Activated B cell treated with CpG ODN at 0.5 μM for 24 hours (primary cell): ENCODE measurements at regions of chr3 and their contacts with region 1.

Region 1: DNA sequence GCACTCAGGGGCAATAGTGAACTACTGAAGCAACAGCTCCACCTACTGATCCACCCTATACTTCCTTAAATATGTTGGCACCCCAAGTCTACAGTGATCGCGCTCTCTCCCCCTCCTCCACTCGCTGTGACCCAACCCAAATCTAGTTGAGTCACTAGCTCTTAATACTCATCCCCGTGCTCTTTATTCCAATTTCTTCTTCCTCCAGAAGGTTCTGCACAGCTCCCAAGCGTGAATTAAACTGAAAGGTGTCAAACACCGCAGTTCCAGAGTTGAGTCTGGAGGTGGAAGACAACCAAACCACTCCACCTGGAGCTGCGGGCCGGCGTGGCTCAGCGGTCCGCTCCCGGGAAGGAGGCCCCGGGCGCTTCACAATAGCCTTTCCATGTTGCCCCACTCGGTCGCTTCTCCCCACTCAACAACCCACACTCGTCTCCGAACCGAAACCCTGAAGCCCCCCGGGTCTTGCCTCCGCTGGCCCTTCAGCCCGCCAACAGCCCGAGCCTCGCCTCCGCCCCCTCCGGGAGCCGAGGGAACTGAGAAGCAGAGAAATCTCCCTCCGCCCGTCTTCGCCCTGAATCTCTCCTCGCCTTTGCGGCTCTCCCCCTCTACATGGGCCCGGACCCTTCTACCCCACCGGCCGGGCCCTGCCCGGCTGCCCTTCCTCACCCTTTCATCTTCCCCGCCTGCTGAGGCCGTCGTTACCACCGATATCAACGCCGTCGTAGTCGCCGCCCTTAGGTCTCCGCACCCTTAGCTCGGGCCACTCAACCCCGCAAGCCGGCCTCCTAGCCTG is 578 bp downstream of the NAA50 start:
- DNase-seq: peak; percentile 70
- ATAC-seq: peak; percentile 63
- H3K4me3 Mint-ChIP-seq: peak overlapping the region; percentile 93
- H3K27ac Mint-ChIP-seq: peak overlapping the region; percentile 100
- H3K4me1 Mint-ChIP-seq: peaks cover 74% of the 10 kb centered on the region
- H3K27me3 Mint-ChIP-seq: no peaks in the 10 kb centered on the region
- CTCF ChIP-seq: no peak

Region 2: GRCh38 chr3:112473212-112473640 is 1272.2 kb before region 1 on chr3:
- CTCF ChIA-PET with region 1: no interaction called
- POLR2A ChIA-PET with region 1: no interaction called
- intact Hi-C with region 1: loop called (anchors 5 kb)
- DNase-seq: no peak
- ATAC-seq: peak; percentile 80
- H3K4me3 Mint-ChIP-seq: peak overlapping the region; percentile 82
- H3K27ac Mint-ChIP-seq: peak overlapping the region; percentile 98
- H3K4me1 Mint-ChIP-seq: peaks cover 88% of the 10 kb centered on the region
- H3K27me3 Mint-ChIP-seq: no peaks in the 10 kb centered on the region
- CTCF ChIP-seq: no peak

Region 3: GRCh38 chr3:113514265-113514769 is 231.2 kb before region 1 on chr3:
- CTCF ChIA-PET with region 1: interaction called, 3 read pairs
- POLR2A ChIA-PET with region 1: interaction called, 19 read pairs
- intact Hi-C with region 1: loop called (anchors 1 kb)
- DNase-seq: no peak
- ATAC-seq: no peak
- H3K4me3 Mint-ChIP-seq: no peak overlapping the region
- H3K27ac Mint-ChIP-seq: no peak overlapping the region
- H3K4me1 Mint-ChIP-seq: peaks cover 7% of the 10 kb centered on the region
- H3K27me3 Mint-ChIP-seq: peaks cover 16% of the 10 kb centered on the region
- CTCF ChIP-seq: no peak

Region 4: GRCh38 chr3:113696658-113697499 is 48.6 kb before region 1 on chr3:
- CTCF ChIA-PET with region 1: no interaction called
- POLR2A ChIA-PET with region 1: interaction called, 47 read pairs
- intact Hi-C with region 1: loop called (anchors 1 kb)
- DNase-seq: peak; percentile 95
- ATAC-seq: peak; percentile 89
- H3K4me3 Mint-ChIP-seq: no peak overlapping the region
- H3K27ac Mint-ChIP-seq: no peak overlapping the region
- H3K4me1 Mint-ChIP-seq: peaks cover 29% of the 10 kb centered on the region
- H3K27me3 Mint-ChIP-seq: no peaks in the 10 kb centered on the region
- CTCF ChIP-seq: no peak

Region 5: GRCh38 chr3:113838631-113839209 is 93.2 kb after region 1 on chr3 and contains the start of gene GRAMD1C:
- CTCF ChIA-PET with region 1: interaction called, 22 read pairs
- POLR2A ChIA-PET with region 1: interaction called, 8 read pairs
- intact Hi-C with region 1: loop called (anchors 1 kb)
- DNase-seq: peak; percentile 78
- ATAC-seq: peak; percentile 99
- H3K4me3 Mint-ChIP-seq: peak within 1 kb of the TSS; percentile 90
- H3K27ac Mint-ChIP-seq: peak within 1 kb of the TSS; percentile 59
- H3K4me1 Mint-ChIP-seq: peaks cover 22% of the 10 kb centered on the region
- H3K27me3 Mint-ChIP-seq: no peaks in the 10 kb centered on the region
- CTCF ChIP-seq: peak; percentile 59
- total RNA-seq, gene GRAMD1C: 11.4 and 12.2 TPM in 2 replicates

Region 6: DNA sequence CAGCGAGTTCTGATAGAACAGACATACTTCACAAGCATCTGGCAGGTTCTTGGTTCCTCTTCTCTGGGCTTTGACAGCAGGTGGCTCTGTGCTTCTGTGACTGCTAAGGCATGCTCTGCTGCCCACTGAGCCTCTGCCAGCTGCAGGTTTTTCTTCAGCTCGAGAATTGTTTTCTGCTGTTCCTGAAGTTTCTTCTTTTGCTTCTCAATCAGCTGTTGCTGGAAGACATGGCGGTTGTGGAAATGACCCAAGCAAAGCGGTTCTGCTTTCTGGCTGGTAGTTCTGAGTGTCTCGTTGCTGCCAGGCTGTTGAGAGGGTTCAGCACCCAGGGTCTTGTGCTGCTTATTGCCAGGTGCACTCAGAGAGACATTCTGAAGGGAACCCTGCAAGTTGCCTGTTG is 260.0 kb after region 1 on chr3:
- CTCF ChIA-PET with region 1: no interaction called
- POLR2A ChIA-PET with region 1: interaction called, 6 read pairs
- intact Hi-C with region 1: loop called (anchors 2 kb)
- DNase-seq: peak; percentile 52
- ATAC-seq: peak; percentile 95
- H3K4me3 Mint-ChIP-seq: peak overlapping the region; percentile 76
- H3K27ac Mint-ChIP-seq: peak overlapping the region; percentile 97
- H3K4me1 Mint-ChIP-seq: peaks cover 61% of the 10 kb centered on the region
- H3K27me3 Mint-ChIP-seq: no peaks in the 10 kb centered on the region
- CTCF ChIP-seq: no peak

Region 7: DNA sequence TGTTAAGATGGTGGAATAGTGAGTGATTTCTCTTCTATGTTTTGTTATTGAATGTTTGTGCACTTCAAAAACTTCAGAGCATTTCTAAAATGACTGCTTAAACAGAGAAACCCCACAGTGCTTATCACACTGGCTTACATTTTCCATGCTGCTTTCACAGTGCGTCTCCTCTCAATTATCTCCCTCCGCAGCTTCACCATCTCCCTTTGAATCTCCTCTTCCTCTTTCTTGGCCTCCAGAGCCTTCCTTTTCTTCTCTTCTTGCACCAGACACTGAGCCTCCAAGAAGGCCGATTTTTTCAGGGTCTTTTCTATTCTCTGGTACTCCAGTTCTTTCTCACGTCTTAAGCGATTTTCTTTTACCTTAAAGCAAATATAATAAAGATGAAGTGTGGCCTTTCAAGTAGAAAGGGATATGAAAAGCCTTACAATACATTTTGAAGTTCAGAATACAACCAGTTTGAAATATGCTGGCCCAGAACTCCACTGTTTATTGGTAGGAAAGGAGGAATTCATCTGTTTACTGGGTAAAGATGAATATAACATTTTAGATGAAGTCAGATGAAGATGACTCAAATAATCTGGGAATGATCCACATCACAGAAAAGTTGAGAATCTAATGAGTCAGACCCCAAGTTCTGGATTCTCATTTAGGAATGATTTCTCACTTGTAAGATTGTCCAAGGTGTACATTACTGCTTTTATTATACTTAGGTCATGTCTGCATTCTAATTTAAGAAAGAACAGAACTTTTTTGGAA is 289.5 kb after region 1 on chr3:
- CTCF ChIA-PET with region 1: no interaction called
- POLR2A ChIA-PET with region 1: no interaction called
- intact Hi-C with region 1: no loop called
- DNase-seq: no peak
- ATAC-seq: no peak
- H3K4me3 Mint-ChIP-seq: no peak overlapping the region
- H3K27ac Mint-ChIP-seq: no peak overlapping the region
- H3K4me1 Mint-ChIP-seq: no peaks in the 10 kb centered on the region
- H3K27me3 Mint-ChIP-seq: no peaks in the 10 kb centered on the region
- CTCF ChIP-seq: no peak

Region 8: DNA sequence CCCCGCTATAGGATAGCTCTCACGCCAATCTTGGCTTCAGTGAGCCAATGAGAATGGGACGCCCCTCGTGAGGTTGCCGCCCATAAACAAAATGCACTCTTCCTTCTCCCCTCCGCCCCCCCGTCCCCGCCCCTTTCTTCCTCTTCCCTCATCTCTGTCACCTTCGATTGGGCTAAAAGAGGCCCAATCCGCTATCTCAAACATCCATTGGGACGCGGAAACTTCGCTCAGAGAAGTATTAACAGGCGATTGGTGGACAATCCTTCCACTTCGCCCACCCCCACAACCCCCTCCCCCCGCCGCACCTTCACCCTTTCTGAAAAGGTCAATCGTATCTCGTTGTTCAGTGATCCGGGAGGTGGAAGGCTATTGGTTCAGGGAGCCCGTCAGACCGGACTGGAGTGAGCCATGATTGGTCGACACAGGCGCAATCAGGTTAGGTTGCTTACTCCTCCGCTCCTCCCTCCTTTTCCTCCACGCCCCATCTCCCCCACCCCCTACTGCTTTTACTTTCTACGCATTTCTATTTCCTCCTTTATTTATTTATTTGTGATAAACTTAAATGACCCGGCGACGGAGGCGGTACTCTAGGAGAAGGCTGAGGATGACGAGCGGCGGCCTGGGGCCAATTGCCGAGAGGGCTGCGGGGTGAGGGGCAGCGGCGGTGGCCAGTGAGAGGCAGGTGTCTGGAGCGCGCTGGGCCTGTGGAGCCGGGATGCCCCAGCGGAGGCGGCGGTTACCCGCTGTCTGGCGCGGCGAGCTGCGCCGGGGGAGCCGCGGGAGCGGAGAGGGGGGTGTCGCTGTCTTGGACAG is 1402.1 kb after region 1 on chr3:
- CTCF ChIA-PET with region 1: no interaction called
- POLR2A ChIA-PET with region 1: interaction called, 3 read pairs
- intact Hi-C with region 1: loop called (anchors 1 kb)
- DNase-seq: peak; percentile 81
- ATAC-seq: peak; percentile 77
- H3K4me3 Mint-ChIP-seq: peak overlapping the region; percentile 94
- H3K27ac Mint-ChIP-seq: peak overlapping the region; percentile 98
- H3K4me1 Mint-ChIP-seq: peaks cover 34% of the 10 kb centered on the region
- H3K27me3 Mint-ChIP-seq: no peaks in the 10 kb centered on the region
- CTCF ChIP-seq: no peak